Dendritic cell treated with granulocyte-macrophage colony-stimulating factor and Interleukin-4, amounts not matched to agents 40 ng/mL and 50 ng/mL, for 4 days (primary cell): ENCODE measurements at regions of chr2 and their contacts with region 1.

Region 1: GRCh38 chr2:231612179-231613053 is 19.8 kb downstream of the TEX44 start:
- H3K4me3 Mint-ChIP-seq: peak overlapping the region; percentile 80
- H3K27ac Mint-ChIP-seq: peak overlapping the region; percentile 90
- H3K4me1 Mint-ChIP-seq: peaks cover 54% of the 10 kb centered on the region
- H3K27me3 Mint-ChIP-seq: peaks cover 32% of the 10 kb centered on the region

Region 2: DNA sequence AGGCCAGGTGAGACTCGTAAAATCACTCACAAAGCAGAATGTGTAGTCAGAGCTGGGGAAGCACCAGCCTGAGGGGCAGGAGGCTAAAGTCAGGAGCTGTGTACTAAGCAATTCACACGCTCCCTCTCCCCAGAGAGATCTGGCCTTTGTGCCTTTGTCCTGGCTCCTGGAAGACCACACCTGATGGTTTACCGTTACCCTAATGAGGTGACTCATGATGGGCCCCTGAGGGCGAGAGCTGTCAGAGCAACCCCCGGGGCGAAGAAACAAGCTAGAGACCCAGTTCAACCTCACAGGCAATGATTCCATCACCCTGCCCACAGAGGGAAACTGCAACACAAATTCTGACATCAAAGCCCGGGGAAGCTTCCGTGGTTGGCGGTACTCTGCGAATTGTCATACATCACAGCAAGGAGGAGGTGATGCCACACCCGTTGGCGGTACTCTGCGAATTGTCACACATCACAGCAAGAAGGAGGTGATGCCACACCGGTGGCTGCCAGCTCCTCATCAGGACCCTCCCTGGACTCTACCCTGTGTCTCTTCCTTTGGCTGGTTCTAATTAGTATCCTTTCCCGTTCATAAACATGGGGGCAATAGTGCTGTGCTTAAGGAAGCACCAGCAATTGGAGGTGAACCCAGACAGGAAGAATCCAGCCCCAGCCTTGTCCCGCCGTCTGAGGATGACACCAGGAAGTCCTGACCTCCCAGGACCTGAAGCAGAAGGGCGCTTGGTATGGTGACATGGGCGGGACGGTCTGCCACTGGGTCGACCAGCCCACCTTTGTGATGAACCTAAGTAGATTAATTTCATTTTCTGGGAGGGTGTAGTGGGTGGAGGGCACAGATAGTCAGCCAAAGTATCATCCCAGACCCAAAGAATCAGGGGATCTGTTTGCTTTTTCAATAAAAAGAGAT is 186.3 kb before region 1 on chr2:
- intact Hi-C with region 1: no loop called
- H3K4me3 Mint-ChIP-seq: no peak overlapping the region
- H3K27ac Mint-ChIP-seq: no peak overlapping the region
- H3K4me1 Mint-ChIP-seq: peaks cover 8% of the 10 kb centered on the region
- H3K27me3 Mint-ChIP-seq: peaks cover 7% of the 10 kb centered on the region

Region 3: DNA sequence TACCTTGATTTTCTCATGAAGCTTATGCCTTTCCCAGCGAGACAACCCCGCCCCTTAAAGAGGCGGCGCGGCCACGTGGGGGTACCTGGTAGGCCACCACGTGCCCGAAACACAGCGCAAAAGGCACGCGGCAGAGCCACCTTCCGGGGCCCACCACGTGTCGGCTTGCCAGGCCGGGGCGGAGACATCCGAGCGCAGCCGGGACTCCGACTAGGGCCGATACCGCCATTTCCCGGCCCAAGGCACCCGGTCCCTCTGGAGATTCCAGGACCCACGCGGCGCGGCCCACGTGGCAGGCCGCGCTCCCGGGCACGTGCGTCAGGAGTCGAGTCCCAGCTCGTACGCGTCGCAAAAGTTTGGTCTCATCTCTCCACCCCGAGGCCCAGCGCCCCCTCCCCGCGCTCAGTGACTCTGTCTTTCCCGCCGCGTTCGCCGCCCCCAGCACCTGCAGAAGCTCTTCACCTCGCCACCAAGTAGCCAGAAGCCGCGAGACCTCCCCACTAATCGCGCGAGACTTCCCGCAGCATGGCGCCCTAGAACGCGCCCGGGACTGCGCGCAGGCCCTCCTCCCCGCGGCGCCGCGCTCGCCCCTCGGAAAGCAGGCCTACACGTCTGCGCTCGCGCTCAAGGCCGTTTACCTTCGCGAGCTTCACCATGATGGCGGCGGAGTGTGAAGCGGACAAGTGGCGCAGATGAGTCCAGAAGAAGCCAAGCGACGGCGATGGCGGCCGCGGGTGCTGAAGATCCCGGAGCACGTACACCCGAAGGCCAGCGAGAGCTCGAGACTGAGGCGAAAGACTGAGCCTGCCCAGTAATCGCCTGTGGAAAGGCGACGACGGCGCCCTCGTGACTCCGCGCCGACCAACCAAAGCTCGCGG is 148.5 kb before region 1 on chr2 and contains the start of gene NCL:
- intact Hi-C with region 1: no loop called
- H3K4me3 Mint-ChIP-seq: peak within 1 kb of the TSS; percentile 96
- H3K27ac Mint-ChIP-seq: peak within 1 kb of the TSS; percentile 94
- H3K4me1 Mint-ChIP-seq: peaks cover 62% of the 10 kb centered on the region
- H3K27me3 Mint-ChIP-seq: no peaks in the 10 kb centered on the region

Region 4: DNA sequence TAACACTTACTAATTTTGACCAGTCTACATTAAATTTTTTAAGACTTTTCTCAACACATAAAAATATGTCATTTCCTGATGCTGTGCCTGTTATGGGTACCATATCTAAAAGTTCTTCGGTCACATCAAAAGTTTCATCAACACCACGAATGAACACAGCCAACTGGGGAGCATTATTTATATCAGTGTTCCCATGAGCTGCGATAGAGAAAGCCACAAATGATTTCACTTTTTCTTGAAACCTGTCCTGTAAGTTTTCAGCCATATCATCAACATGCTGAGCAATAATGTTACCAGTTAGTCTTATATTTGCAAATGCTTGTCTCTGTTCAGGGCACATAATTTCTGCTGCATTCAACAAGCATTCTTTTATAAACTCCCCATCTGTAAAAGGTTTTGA is 117.7 kb before region 1 on chr2:
- intact Hi-C with region 1: no loop called
- H3K4me3 Mint-ChIP-seq: no peak overlapping the region
- H3K27ac Mint-ChIP-seq: no peak overlapping the region
- H3K4me1 Mint-ChIP-seq: no peaks in the 10 kb centered on the region
- H3K27me3 Mint-ChIP-seq: peaks cover 1% of the 10 kb centered on the region

Region 5: DNA sequence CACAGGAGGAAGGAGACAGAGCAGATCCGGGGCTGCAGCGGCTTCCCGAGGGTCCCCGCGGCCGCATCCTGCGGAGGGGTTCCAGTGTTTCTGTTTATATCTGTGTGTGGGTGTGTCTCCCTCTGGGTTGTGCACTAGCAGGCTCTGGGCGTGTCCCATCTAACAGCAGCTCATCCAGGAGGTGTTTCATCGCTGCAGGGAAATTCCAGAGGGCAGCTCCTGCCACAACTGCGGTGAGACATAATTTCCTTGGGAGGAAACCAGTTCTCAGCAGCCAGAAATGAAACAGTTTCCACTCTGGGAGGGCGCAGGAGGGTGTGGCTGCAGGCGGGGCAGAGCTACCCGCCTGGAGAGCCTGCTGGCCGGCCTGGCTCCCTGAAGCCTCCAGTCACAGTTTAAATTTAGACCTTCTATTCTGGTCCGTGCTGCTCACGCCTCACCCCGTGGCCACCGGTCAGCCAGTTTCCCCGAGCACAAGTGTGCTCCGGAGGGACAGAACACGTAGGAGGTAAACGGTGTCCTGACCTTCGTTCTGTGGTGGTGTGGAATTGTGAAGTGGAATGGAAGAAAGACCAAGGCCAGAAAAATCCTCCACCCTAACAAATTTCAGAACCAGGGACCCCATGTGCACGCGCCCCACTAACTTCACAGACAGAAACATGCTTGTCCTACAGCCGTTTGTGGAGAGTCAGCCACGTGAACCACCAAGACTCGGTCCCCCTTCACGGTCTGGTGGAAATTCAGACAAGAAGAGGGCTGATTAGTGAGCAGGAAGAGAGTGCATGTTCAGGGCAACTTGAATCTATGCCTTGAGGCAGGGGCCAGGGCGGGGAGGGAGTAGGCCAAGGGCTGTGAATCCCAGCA is 30.4 kb after region 1 on chr2:
- intact Hi-C with region 1: loop called (anchors 2 kb)
- H3K4me3 Mint-ChIP-seq: peak overlapping the region; percentile 62
- H3K27ac Mint-ChIP-seq: peak overlapping the region; percentile 77
- H3K4me1 Mint-ChIP-seq: peaks cover 25% of the 10 kb centered on the region
- H3K27me3 Mint-ChIP-seq: peaks cover 10% of the 10 kb centered on the region

Region 6: DNA sequence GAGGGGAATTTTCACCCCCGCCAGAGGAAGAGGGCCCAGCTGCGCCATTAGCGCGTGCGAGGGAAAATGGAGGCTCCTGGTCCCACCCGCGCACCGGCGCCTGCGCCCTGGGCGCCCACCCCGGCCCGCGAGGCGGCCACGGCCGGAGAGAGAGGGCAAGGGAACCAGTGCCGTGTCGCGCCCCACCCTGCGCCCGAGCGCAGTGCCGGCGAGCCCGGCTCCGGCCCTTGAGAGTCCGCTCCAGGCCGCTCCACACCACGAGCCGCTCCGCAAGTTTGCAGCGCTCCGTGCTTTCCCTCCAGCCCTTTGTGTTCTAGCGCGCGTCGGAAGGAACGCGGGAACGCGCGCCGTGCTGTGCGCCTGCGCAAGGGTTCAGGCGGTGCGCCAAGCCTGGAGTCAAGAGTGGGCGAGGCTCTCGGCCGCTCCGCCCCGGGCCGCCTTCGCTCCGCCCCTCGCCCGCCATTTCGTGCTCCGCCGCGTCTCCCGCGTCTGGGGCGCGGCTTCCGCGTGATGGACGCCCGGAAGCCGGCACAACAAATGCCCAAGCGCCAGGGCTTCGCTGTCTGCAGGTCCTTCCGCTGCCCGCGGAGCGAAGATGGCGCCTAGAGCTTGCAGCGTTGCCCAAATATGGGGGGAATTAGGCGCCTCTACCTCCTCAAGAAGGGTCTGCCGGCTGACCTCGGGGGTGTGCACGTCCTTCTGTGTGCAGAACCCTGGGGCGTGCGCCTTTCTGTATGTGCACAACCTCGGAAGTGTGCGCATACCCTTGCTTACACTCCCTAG is 49.8 kb after region 1 on chr2:
- intact Hi-C with region 1: loop called (anchors 1 kb)
- H3K4me3 Mint-ChIP-seq: peak overlapping the region; percentile 63
- H3K27ac Mint-ChIP-seq: peak overlapping the region; percentile 95
- H3K4me1 Mint-ChIP-seq: peaks cover 26% of the 10 kb centered on the region
- H3K27me3 Mint-ChIP-seq: peaks cover 2% of the 10 kb centered on the region

Region 7: GRCh38 chr2:231674587-231675338 is 62.3 kb after region 1 on chr2:
- intact Hi-C with region 1: loop called (anchors 1 kb)
- H3K4me3 Mint-ChIP-seq: no peak overlapping the region
- H3K27ac Mint-ChIP-seq: no peak overlapping the region
- H3K4me1 Mint-ChIP-seq: peaks cover 58% of the 10 kb centered on the region
- H3K27me3 Mint-ChIP-seq: peaks cover 5% of the 10 kb centered on the region

Region 8: DNA sequence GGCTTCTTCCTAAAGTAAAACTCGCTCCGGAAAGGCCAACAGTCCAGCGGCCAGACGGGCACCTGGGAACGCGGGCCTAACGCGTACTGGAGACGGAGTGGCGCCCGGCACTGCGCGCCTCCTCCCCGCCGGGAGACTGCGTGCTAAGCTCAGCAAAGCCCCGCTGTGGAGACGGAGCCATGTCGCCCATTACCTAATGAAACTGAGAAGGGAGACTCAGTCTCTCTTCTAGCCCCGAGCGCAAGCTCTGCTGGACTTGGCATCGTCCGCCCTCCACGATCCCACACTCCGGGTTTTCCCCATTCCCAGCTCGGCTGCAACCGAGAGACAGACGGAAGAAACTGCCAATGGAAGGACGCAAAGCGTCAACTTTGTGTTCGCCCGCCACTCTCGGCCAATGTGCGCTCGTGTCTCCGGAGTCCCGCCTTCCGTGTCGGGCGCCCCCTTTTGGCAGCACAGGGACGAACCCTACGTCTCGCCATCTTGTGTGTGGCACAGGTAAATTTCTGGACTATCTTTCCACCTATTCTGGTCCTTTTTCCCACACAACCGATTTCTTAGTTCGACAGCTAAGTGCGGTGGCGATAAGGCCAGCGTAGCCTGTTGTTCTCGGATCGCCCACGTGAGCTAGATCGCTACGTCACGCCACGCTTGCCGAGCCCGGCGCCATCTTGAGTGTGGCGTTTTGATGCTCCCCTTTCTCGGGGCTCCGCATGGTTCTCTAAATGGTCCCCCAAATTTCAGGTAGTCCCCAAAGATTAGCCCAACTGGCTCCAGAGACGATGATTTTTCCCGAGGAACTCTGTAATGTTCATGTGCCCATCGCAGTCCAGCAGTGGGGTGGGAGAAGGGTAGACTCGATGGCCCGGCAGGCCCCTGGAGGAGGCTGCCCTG is 94.6 kb after region 1 on chr2:
- intact Hi-C with region 1: loop called (anchors 2 kb)
- H3K4me3 Mint-ChIP-seq: peak overlapping the region; percentile 85
- H3K27ac Mint-ChIP-seq: peak overlapping the region; percentile 98
- H3K4me1 Mint-ChIP-seq: peaks cover 22% of the 10 kb centered on the region
- H3K27me3 Mint-ChIP-seq: no peaks in the 10 kb centered on the region

Region 9: GRCh38 chr2:231713730-231714430 is 101.5 kb after region 1 on chr2:
- intact Hi-C with region 1: loop called (anchors 1 kb)
- H3K4me3 Mint-ChIP-seq: peak overlapping the region; percentile 23
- H3K27ac Mint-ChIP-seq: peak overlapping the region; percentile 85
- H3K4me1 Mint-ChIP-seq: peaks cover 72% of the 10 kb centered on the region
- H3K27me3 Mint-ChIP-seq: no peaks in the 10 kb centered on the region

Region 10: GRCh38 chr2:233185963-233186362 is 1573.5 kb after region 1 on chr2:
- intact Hi-C with region 1: no loop called
- H3K4me3 Mint-ChIP-seq: no peak overlapping the region
- H3K27ac Mint-ChIP-seq: peak overlapping the region; percentile 79
- H3K4me1 Mint-ChIP-seq: peaks cover 91% of the 10 kb centered on the region
- H3K27me3 Mint-ChIP-seq: no peaks in the 10 kb centered on the region